ENCODE measurements at regions of chr1 and their contacts with region 1.

Region 1: GRCh38 chr1:25616095-25616986 is at the start of gene MAN1C1:
- DNase-seq: peak; percentile 80
- H3K4me3 ChIP-seq: peak within 1 kb of the TSS; percentile 37 to 57 (median 39)
- H3K27ac ChIP-seq: no peak within 1 kb of the TSS
- H3K4me1 ChIP-seq: peaks cover 7% of the 10 kb centered on the region
- H3K27me3 ChIP-seq: peaks cover 53 to 56% of the 10 kb centered on the region in 2 experiments
- CTCF ChIP-seq: peak; percentile 26 to 65
- POLR2A ChIP-seq: no peak
- total RNA-seq, gene MAN1C1: 0.85 and 4.0 TPM in 2 replicates

Region 2: DNA sequence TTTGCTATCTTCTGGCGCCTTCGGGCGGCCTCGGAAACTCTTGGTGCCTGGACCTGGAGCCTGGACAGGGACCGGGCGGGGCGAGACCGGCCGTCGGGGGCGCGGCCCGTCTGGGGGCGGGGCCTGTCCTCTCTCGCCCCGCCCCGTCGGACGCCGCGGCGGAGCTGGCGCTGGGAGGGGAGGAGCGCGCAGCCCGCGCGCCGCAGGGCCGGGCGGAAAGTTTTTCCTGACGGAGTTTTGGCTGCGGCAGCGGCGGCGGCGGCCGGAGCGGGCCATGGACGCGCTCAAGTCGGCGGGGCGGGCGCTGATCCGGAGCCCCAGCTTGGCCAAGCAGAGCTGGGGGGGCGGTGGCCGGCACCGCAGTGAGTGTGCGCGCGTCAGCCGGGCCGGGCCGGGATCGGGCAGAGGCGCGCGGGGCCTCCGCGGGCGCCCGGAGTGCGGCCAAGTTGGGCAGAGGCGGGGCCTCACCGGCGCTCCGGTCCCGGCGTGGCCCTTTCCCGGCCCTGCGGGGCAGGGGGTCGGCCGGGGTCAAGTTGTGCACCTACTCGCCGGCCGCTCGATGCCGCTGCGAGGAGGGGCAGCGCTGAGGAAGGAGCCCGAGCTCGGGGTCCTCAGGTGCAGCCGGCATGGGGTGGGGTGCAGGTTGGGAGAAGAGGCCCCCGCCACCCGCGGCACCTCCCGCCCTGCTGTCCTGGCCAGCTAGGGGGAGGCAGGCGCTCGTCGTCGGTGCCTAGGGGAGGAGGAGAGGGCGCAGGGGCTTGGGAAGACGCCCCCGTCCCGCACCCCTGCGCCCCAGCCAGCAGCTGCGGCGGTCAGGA is 72.7 kb before region 1 on chr1 and contains the start of gene LDLRAP1:
- CTCF ChIA-PET with region 1: interaction called, 3 read pairs
- POLR2A ChIA-PET with region 1: no interaction called
- dilution Hi-C with region 1: no loop called
- intact Hi-C with region 1: loop called (anchors 2 kb)
- DNase-seq: peak; percentile 74
- H3K4me3 ChIP-seq: peak within 1 kb of the TSS; percentile 65 to 80 (median 75)
- H3K27ac ChIP-seq: peak within 1 kb of the TSS; percentile 23
- H3K4me1 ChIP-seq: peaks cover 7% of the 10 kb centered on the region
- H3K27me3 ChIP-seq: no peaks in the 10 kb centered on the region
- CTCF ChIP-seq: no peak
- POLR2A ChIP-seq: peak; percentile 72
- total RNA-seq, gene LDLRAP1: 20.8 and 24.7 TPM in 2 replicates

Region 3: GRCh38 chr1:25810341-25811299 is 194.3 kb after region 1 on chr1:
- CTCF ChIA-PET with region 1: interaction called, 7 read pairs
- POLR2A ChIA-PET with region 1: no interaction called
- dilution Hi-C with region 1: no loop called
- intact Hi-C with region 1: loop called (anchors 1 kb)
- DNase-seq: peak; percentile 44
- H3K4me3 ChIP-seq: no peak overlapping the region
- H3K27ac ChIP-seq: no peak overlapping the region
- H3K4me1 ChIP-seq: peaks cover 10% of the 10 kb centered on the region
- H3K27me3 ChIP-seq: no peaks in the 10 kb centered on the region
- CTCF ChIP-seq: peak; percentile 78 to 95
- POLR2A ChIP-seq: no peak

Measured in endothelial cell of umbilical vein (primary cell).